ENCODE measurements at regions of chr5 and their contacts with region 1.

Region 1: DNA sequence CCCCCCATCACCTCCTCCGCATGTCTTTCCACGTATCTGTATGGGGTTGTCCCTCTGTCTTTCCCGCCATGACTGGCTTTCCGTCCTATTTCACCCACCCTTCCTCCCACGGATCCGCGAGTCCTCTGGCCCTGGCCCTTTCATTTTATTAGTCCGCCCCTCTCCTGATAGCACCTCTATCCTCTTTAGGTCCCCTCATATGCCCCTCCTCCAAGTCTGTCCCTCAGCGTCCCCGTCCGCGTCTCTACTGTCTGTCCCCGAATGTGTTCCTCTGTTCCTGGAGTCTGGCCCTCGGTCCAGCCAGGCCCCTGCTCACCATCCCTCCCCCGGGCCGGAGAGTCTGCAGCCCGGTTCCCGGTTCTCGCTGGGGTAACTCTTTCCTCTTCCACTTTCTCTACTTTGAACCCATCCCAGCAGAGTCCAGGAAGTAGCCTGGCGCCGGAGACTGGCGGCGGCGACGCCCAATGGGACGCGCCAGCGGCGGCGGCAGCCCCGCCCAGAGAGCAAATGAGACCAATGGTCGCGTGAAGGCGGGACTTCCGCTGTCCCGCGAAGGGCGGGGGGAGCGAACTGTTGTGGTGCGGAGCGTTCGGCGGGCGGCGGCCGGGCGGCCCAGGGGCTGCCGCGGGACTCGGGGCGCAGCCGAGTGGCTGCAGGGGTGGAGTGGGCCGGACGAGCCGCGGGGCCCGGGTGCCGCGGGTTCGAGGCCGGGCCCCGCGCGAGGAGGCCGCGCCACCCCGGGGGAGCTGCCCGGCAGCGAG is at the start of gene SAP30L:
- DNase-seq: peak; percentile 98
- H3K4me3 Mint-ChIP-seq: peak within 1 kb of the TSS; percentile 99
- H3K27ac Mint-ChIP-seq: peak within 1 kb of the TSS; percentile 90
- H3K4me1 Mint-ChIP-seq: peaks cover 47% of the 10 kb centered on the region
- H3K27me3 Mint-ChIP-seq: no peaks in the 10 kb centered on the region
- CTCF ChIP-seq: no peak
- total RNA-seq, gene SAP30L: 45.9 and 50.5 TPM in 2 replicates

Region 2: DNA sequence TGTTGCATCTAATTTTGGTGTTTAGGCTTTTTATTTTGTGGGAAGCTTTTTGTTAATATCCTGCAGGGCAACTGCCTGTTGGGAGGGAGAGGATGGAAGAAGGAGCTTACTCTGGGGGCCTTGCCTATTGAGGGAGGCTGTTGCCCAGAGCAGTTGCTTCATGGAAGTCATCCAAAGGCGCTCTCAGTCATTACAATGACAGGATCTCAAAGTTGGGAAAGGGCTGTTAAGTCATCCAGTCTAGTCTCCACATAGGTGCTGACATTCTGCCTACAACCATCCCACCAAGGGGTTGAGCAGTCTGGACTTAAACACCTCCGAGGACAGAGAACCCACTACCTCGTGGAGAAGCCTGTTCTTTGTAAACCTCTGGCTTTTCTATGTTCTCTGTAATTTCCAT is 13.4 kb after region 1 on chr5:
- CTCF ChIA-PET with region 1: interaction called, 8 read pairs
- POLR2A ChIA-PET with region 1: interaction called, 34 read pairs
- intact Hi-C with region 1: no loop called
- DNase-seq: no peak
- H3K4me3 Mint-ChIP-seq: no peak overlapping the region
- H3K27ac Mint-ChIP-seq: no peak overlapping the region
- H3K4me1 Mint-ChIP-seq: no peaks in the 10 kb centered on the region
- H3K27me3 Mint-ChIP-seq: no peaks in the 10 kb centered on the region
- CTCF ChIP-seq: no peak

Measured in MCF 10A (cell line).